Breast epithelium (tissue), 4 donors: ENCODE measurements at regions of chr15 and their contacts with region 1.

Region 1: GRCh38 chr15:69096196-69096595 is 64.2 kb upstream of the GLCE start:
- DNase-seq: no peak
- H3K4me3 ChIP-seq: no peak overlapping the region
- H3K27ac ChIP-seq: no peak overlapping the region
- H3K4me1 ChIP-seq: no peaks in the 10 kb centered on the region
- H3K27me3 ChIP-seq: no peaks in the 10 kb centered on the region
- CTCF ChIP-seq: no peak
- POLR2A ChIP-seq: no peak

Region 2: GRCh38 chr15:69138963-69139362 is 42.8 kb after region 1 on chr15:
- intact Hi-C with region 1: loop called (anchors 5 kb)
- DNase-seq: no peak
- H3K4me3 ChIP-seq: no peak overlapping the region
- H3K27ac ChIP-seq: no peak overlapping the region
- H3K4me1 ChIP-seq: no peaks in the 10 kb centered on the region
- H3K27me3 ChIP-seq: no peaks in the 10 kb centered on the region
- CTCF ChIP-seq: no peak
- POLR2A ChIP-seq: no peak